ENCODE measurements at regions of chr12 and their contacts with region 1.

Region 1: GRCh38 chr12:49130151-49131050 is 794 bp downstream of the TUBA1B start:
- DNase-seq: peak; percentile 90
- ATAC-seq: peak; percentile 77
- H3K4me3 ChIP-seq: peak overlapping the region; percentile 100
- H3K27ac ChIP-seq: peak overlapping the region; percentile 98
- H3K4me1 ChIP-seq: peaks cover 13% of the 10 kb centered on the region
- H3K27me3 ChIP-seq: no peaks in the 10 kb centered on the region
- CTCF ChIP-seq: peak; percentile 95 to 96 (median 95)
- EP300 ChIP-seq: peak in 1 of 2 experiments; percentile 24; a peak in 1 of 4 replicates
- POLR2A ChIP-seq: peak; percentile 84
- RAD21 ChIP-seq: peak; percentile 37; the same call in 1 of the 2 replicates

Region 2: DNA sequence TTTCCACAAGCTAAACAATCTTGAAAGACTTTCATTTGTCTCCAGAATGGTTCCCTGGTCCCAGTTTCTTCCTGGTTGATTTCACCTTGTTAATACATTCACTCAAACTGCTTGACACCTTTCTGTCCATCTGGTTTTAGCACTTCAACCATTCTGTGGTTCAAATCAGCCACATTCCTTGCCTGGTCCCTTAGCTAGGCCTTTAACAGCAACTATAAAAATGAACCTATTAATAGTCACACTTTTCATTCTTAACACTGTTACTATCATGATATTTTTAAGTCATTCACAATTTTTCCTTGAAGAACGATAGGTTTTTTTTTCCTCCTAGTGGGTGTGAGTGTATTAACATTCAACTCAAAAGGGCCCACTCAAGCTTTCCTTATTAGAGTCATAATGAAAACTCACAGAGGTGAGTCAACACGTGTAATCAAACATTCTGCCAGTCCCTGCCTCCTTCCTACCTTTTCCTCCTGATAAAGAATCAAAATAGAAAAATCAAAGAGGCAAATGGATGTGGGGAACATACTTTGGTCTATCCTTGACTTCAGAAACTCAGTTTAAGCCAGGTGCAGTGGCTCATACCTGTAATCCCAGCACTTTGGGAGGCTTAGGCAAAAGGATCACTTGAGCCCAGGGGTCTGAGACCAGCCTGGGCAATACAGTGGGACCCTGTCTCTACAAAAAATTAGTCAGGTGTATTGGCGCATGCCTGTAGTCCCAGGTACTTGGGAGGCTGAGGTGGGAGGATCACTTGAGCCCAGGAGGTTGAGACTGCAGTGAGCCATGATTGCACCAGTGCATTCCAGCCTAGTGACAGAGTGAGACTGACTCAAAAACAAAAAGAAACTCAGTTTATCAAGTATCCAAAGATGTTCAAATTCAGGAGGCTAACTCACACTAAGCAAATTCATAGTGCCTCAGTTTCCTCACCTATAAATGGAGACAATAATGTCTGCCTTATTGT is 379.3 kb before region 1 on chr12:
- CTCF ChIA-PET with region 1: no interaction called
- POLR2A ChIA-PET with region 1: no interaction called
- RAD21 ChIA-PET with region 1: no interaction called
- SMC1A ChIA-PET with region 1: no interaction called
- in situ Hi-C with region 1: no loop called
- intact Hi-C with region 1: no loop called
- DNase-seq: no peak
- ATAC-seq: no peak
- H3K4me3 ChIP-seq: no peak overlapping the region
- H3K27ac ChIP-seq: no peak overlapping the region
- H3K4me1 ChIP-seq: no peaks in the 10 kb centered on the region
- H3K27me3 ChIP-seq: no peaks in the 10 kb centered on the region; a peak in 1 of 4 replicates
- CTCF ChIP-seq: no peak
- EP300 ChIP-seq: no peak
- POLR2A ChIP-seq: no peak
- RAD21 ChIP-seq: no peak

Region 3: DNA sequence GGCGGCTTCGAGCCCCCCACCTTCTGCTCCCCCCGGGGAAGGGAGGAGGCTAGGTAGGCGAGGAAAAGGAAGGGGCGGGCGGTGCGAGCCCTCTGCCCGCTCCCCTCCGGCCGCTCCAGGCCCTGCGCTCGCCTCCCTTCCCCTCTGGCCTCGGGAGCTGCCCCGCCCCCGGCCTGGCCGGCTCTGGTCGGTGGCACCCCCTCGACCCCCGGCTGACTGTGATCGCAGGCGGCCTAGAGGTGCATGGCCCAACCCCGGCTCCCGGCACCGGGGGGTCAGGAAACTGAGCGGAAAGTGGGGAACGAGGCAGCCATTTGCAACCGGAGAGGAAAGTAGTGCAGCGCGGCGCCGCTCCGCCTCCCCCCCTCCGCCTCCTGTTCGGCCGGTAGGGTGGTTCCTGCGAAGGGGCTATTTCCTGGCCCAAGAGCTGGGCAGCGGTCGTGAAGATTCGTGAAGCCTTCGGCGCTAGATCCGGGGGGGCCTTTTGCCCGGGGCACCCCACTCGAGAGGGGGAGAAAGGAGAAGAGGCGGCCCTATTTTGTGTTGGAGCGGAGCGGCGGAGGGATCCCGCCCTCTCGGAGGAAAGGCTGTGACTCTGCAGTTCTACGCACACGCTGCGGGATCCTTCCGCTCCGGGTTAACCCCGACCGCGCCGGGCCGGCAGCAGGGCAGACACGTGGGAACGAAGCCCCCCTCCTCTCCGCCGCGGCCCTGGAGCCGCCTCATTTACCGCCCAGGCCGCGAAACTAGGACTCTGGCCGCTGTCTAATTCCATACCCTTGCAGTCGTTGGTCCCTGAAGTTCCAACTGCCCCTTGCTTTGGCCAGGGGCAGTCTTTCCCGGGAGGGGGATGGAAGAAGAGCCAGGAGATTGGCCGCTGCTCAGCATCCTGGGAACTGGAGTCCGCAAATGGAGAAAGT is 69.9 kb before region 1 on chr12 and contains the start of gene KMT2D:
- CTCF ChIA-PET with region 1: interaction called, 35 read pairs
- POLR2A ChIA-PET with region 1: interaction called, 32 read pairs
- RAD21 ChIA-PET with region 1: interaction called, 28 read pairs
- SMC1A ChIA-PET with region 1: interaction called, 5 read pairs
- in situ Hi-C with region 1: no loop called
- intact Hi-C with region 1: loop called (anchors 1 kb)
- DNase-seq: peak; percentile 59
- ATAC-seq: peak; percentile 78
- H3K4me3 ChIP-seq: peak within 1 kb of the TSS; percentile 99
- H3K27ac ChIP-seq: peak within 1 kb of the TSS; percentile 99
- H3K4me1 ChIP-seq: peaks cover 6% of the 10 kb centered on the region
- H3K27me3 ChIP-seq: no peaks in the 10 kb centered on the region
- CTCF ChIP-seq: peak in 1 of 3 experiments; percentile 28; a peak in 1 of 6 replicates
- EP300 ChIP-seq: peak in 1 of 2 experiments; percentile 66; a peak in 1 of 4 replicates
- POLR2A ChIP-seq: peak; percentile 80
- RAD21 ChIP-seq: no peak
- polyA plus RNA-seq, gene KMT2D: 0.51 to 1.2 TPM

Region 4: DNA sequence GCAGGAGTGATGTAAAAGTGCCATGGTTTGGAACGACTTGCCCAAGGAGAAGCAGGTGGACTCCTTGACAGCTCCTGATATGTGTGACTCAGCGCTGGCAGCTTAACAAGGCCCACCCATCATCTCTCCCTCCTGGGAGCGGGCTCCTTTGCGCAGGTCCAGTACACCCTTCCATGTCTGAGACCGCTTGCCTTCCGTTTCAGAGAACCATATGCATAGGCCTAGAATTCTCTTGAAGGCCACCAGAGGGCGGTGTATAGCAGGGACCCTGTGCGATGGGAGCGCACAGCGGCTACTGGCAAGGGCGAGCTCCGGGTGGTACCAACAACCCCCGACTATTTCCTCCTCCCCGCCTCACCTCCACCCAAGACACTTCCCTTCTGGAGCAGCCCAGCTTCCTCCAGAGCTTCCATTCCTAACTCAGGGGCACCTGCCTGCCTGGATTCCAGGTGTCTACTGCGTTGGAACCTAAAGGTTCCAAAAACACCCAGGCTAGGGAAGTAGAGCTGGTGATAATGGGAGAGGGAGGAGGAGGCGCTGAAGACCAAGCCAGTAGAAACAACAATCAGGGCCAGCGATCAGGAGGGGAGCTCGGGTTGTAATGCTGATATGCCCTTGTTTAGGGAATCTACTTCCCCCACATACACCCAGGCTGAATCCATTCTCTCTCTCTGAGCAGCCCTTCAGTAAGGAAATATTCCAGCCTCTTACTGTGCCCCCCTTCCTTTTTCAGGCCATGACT is 42.0 kb before region 1 on chr12:
- CTCF ChIA-PET with region 1: interaction called, 46 read pairs
- POLR2A ChIA-PET with region 1: interaction called, 11 read pairs
- RAD21 ChIA-PET with region 1: interaction called, 20 read pairs
- SMC1A ChIA-PET with region 1: interaction called, 11 read pairs
- in situ Hi-C with region 1: no loop called
- intact Hi-C with region 1: loop called (anchors 1 kb)
- DNase-seq: peak; percentile 44
- ATAC-seq: peak; percentile 96
- H3K4me3 ChIP-seq: 0 out of 2 replicates have a peak overlapping the region, but pooled peaks have one; percentile 5
- H3K27ac ChIP-seq: no peak overlapping the region
- H3K4me1 ChIP-seq: peaks cover 3% of the 10 kb centered on the region; the same call in 1 of the 2 replicates
- H3K27me3 ChIP-seq: peaks cover 27 to 35% of the 10 kb centered on the region in 2 experiments; a peak in 3 of 4 replicates
- CTCF ChIP-seq: peak; percentile 92 to 95 (median 94)
- EP300 ChIP-seq: no peak
- POLR2A ChIP-seq: peak; percentile 31; the same call in 1 of the 2 replicates
- RAD21 ChIP-seq: peak; percentile 76

Region 5: DNA sequence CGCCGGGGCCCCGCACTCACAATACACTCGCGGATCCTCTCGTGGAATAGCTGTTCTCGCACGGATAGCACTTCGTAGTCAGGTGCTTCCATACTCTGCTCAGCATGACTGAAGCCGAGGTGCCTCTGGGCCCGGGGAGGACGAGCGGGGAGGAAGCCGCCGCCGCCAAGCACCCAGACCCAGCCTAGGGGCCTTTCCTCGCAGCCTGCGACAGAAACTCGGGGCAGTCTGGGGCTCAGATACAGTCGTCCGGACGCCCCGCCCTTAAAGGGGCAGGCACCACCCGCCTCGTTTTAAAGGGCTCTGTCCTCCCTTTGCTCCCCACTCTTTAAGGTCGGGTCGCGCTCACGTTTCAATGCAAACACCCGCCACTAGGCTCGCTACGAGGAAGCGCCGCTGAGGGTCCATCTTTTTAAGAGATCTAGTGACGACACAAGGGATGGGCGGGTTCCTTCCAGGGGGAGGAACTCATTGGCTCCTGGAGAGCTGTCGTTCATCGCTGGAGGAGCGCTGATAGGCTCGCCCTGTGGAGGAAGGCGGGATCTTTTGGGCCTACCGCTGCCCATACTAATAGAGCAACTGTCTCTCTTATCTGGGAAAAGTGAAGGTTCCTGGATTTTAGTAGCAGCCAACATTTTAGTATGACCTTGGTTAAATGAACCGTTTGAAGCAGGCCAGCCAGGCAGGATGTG is 19.8 kb before region 1 on chr12 and contains the start of gene LMBR1L:
- CTCF ChIA-PET with region 1: interaction called, 47 read pairs
- POLR2A ChIA-PET with region 1: interaction called, 48 read pairs
- RAD21 ChIA-PET with region 1: interaction called, 18 read pairs
- SMC1A ChIA-PET with region 1: interaction called, 15 read pairs
- in situ Hi-C with region 1: no loop called
- intact Hi-C with region 1: loop called (anchors 1 kb)
- DNase-seq: peak; percentile 93
- ATAC-seq: peak; percentile 98
- H3K4me3 ChIP-seq: peak within 1 kb of the TSS; percentile 87
- H3K27ac ChIP-seq: peak within 1 kb of the TSS; percentile 70
- H3K4me1 ChIP-seq: peaks cover 9% of the 10 kb centered on the region
- H3K27me3 ChIP-seq: no peaks in the 10 kb centered on the region
- CTCF ChIP-seq: peak; percentile 36 to 60 (median 50); a peak in 5 of 6 replicates
- EP300 ChIP-seq: no peak
- POLR2A ChIP-seq: peak; percentile 91
- RAD21 ChIP-seq: 0 out of 2 replicates have a peak, but pooled peaks have one; percentile 32
- polyA plus RNA-seq, gene LMBR1L: 2.1 to 2.8 TPM

Region 6: DNA sequence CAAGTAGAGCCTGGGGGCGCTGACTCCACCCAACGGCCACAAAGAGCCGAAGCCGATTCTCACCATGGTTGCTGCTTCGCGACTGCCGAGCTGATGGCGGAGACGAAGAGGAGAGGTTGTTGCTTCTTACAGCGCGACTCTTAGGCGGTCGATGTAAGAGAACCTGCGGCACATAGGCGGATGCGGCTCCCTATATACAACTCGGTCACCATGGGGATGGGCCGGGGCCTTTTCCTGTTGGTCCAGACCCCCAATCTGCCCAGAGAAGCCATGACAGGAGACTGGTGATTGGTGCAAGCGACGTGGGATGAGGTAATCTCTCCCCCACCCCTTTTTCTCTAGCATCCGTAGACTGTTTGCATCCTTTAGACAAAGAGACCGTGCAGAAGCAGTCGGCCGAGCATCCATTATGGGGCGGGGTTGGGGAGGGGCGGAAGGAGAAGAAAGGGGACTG is 58.5 kb after region 1 on chr12 and contains the start of gene TUBA1A:
- CTCF ChIA-PET with region 1: interaction called, 13 read pairs
- POLR2A ChIA-PET with region 1: interaction called, 19 read pairs
- RAD21 ChIA-PET with region 1: interaction called, 3 read pairs
- SMC1A ChIA-PET with region 1: interaction called, 7 read pairs
- in situ Hi-C with region 1: no loop called
- intact Hi-C with region 1: loop called (anchors 2 kb)
- DNase-seq: peak; percentile 75
- ATAC-seq: peak; percentile 93
- H3K4me3 ChIP-seq: peak within 1 kb of the TSS; percentile 75
- H3K27ac ChIP-seq: peak within 1 kb of the TSS; percentile 72
- H3K4me1 ChIP-seq: no peaks in the 10 kb centered on the region; the same call in none of the 2 replicates
- H3K27me3 ChIP-seq: no peaks in the 10 kb centered on the region; a peak in 1 of 4 replicates
- CTCF ChIP-seq: no peak
- EP300 ChIP-seq: no peak
- POLR2A ChIP-seq: peak; percentile 96
- RAD21 ChIP-seq: no peak
- polyA plus RNA-seq, gene TUBA1A: 431 to 496 TPM

Region 7: DNA sequence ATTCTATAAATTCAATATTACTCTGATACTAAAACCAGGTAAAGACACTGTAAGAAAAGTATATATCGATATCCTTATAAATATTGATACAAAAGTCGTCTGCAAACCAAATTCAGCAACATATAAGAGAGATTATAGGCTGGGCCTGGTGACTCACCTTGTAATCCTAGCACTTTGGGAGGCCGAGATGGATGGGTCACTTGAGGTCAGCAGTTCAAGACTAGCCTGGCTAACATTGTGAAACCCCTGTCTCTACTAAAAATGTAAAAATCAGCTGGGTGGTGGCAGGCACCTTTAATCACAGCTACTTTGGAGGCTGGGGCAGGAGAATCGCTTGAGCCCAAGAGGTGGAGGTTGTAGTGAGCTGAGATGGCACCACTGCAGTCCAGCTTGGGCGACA is 121.0 kb after region 1 on chr12:
- CTCF ChIA-PET with region 1: no interaction called
- POLR2A ChIA-PET with region 1: interaction called, 12 read pairs
- RAD21 ChIA-PET with region 1: no interaction called
- SMC1A ChIA-PET with region 1: no interaction called
- in situ Hi-C with region 1: no loop called
- intact Hi-C with region 1: no loop called
- DNase-seq: no peak
- ATAC-seq: no peak
- H3K4me3 ChIP-seq: no peak overlapping the region
- H3K27ac ChIP-seq: no peak overlapping the region
- H3K4me1 ChIP-seq: no peaks in the 10 kb centered on the region
- H3K27me3 ChIP-seq: no peaks in the 10 kb centered on the region
- CTCF ChIP-seq: no peak
- EP300 ChIP-seq: no peak
- POLR2A ChIP-seq: no peak
- RAD21 ChIP-seq: no peak

Measured in GM12878 (cell line).